Activated naive CD4-positive, alpha-beta T cell treated with anti-CD3 and anti-CD28 coated beads for 36 hours (primary cell): ENCODE measurements at regions of chr2 and their contacts with region 1.

Region 1: GRCh38 chr2:226772389-226773179 is 27.0 kb downstream of the IRS1 start:
- DNase-seq: no peak
- H3K4me3 Mint-ChIP-seq: peak overlapping the region; percentile 10
- H3K27ac Mint-ChIP-seq: no peak overlapping the region
- H3K4me1 Mint-ChIP-seq: peaks cover 21% of the 10 kb centered on the region
- H3K27me3 Mint-ChIP-seq: no peaks in the 10 kb centered on the region

Region 2: DNA sequence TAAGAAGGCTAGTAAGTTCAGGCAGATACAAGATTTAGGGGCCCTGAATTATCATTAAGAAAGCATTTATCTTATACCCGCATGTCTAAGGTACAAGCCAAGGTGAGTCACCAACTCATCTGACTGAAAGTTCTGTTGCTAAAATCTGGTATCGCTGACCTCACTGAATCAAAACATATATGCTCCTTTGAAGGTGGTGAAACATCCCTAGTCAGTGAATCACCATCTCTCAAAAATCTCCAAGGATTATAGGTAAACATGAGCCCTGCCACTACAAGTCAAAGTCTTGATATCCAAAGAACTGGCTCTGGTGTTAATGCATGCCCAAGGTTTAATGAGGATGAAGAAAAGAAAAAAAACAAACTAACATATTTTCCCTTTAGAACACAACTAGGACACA is 16.5 kb before region 1 on chr2:
- CTCF ChIA-PET with region 1: interaction called, 3 read pairs
- intact Hi-C with region 1: loop called (anchors 1 kb)
- DNase-seq: no peak
- H3K4me3 Mint-ChIP-seq: no peak overlapping the region
- H3K27ac Mint-ChIP-seq: no peak overlapping the region
- H3K4me1 Mint-ChIP-seq: peaks cover 5% of the 10 kb centered on the region
- H3K27me3 Mint-ChIP-seq: no peaks in the 10 kb centered on the region